Heart left ventricle (tissue), 16 donors: ENCODE measurements at regions of chr3 and their contacts with region 1.

Region 1: GRCh38 chr3:184261270-184261853 is at the start of gene CAMK2N2:
- DNase-seq: peak in 4 of 5 donors; percentile 45 to 77 (median 56)
- ATAC-seq: peak; percentile 18 to 74 (median 70)
- H3K4me3 ChIP-seq: peak within 1 kb of the TSS; percentile 10 to 59 (median 50)
- H3K27ac ChIP-seq: no peak within 1 kb of the TSS
- H3K4me1 ChIP-seq: peaks cover 8 to 35% (median 22%) of the 10 kb centered on the region in 12 donors
- H3K27me3 ChIP-seq: peaks cover 8 to 73% (median 50%) of the 10 kb centered on the region in 9 donors
- CTCF ChIP-seq: no peak
- POLR2A ChIP-seq: no peak
- total RNA-seq, gene CAMK2N2: 0.17 to 0.37 (median 0.29) TPM in 4 of 9 donors, not detected in the others

Region 2: DNA sequence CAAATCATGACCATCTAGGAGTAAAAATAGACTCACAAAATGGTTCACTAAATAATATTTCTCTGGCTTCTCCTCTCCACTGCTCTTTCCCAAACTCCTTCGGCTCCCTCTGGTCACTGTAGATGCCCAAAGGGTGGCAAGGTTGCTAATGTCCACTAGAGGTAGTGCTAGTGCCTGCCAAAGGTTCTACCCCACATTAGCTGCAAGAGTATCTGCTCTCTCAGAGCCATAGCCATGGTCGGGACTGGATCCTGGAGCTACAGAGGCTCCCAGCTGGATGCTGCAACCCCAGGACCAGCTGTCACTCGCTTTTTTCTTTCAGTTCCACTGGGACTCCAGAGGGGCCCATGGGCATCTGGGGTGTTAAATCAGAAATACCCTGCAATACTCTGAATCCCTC is 221.4 kb before region 1 on chr3:
- intact Hi-C with region 1: loop called in 1 of 10 experiments (anchors 10 kb)
- DNase-seq: no peak
- ATAC-seq: no peak
- H3K4me3 ChIP-seq: no peak overlapping the region
- H3K27ac ChIP-seq: no peak overlapping the region
- H3K4me1 ChIP-seq: no peaks in the 10 kb centered on the region
- H3K27me3 ChIP-seq: no peaks in the 10 kb centered on the region
- CTCF ChIP-seq: peak in 9 of 12 donors; percentile 7 to 34 (median 21)
- POLR2A ChIP-seq: no peak